BJ (cell line): ENCODE measurements at regions of chr16 and their contacts with region 1.

Region 1: DNA sequence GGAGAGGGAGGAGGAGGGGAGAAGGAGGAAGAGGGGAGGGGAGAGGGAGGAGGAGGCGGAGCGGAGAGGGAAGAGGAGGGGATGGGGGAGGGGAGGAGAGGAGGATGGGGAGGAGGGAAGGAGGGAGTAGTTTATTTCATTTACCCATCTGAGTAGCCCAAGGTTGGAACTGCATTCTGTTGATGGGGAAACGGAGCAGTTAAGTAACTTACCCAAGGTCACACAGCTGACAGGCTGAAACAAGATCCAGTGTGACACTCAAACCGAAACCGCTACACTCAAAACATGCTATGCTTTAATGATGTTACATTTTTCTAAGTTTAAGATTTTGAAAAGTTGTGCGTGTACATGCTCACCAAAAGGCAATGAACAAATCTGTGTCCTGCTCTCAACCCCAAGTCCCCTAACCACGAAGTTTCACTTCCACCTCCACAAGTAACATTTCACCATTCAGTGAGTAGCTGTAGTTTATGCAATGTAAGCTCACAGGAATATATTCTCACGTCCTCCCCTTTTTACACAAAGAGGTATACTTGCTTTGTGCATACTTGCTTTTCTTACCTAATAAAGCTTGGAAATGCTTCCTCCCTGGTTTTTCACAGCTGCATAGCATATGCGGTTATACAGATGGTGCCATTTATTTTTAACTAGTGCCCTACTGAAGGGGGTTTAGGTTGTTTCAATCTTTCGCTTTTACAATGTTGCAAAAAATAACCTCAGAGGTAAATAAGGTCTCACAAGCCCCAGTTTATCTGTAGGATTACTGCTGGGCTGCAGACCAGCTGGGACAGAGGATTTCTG is 275.3 kb downstream of the PARN start:
- DNase-seq: no peak
- H3K4me3 ChIP-seq: peak overlapping the region; percentile 23
- H3K27me3 ChIP-seq: no peaks in the 10 kb centered on the region; the same call in 1 of the 2 replicates
- CTCF ChIP-seq: no peak

Region 2: DNA sequence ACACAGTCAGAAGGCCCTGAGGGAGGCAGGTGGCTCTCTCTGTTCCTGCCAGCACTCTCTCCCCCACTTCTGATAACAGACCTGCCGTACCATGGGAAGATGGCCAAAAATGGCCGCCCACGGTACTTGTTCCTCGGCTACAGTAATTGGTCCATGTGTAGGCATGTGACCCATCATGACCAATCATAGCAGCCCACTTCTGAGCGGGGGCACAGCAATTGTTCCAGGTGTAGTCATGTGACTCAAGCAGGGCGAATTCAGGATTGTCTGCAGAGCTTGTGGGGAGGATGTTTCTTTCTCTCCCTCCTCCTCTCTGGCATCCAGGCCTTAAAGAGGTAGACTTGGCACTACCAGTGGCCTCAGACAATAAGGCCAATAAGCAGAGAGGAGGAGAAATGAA is 33.2 kb before region 1 on chr16:
- CTCF ChIA-PET with region 1: no interaction called
- POLR2A ChIA-PET with region 1: interaction called, 10 read pairs
- DNase-seq: no peak
- H3K4me3 ChIP-seq: no peak overlapping the region
- H3K27me3 ChIP-seq: no peaks in the 10 kb centered on the region
- CTCF ChIP-seq: no peak

Region 3: DNA sequence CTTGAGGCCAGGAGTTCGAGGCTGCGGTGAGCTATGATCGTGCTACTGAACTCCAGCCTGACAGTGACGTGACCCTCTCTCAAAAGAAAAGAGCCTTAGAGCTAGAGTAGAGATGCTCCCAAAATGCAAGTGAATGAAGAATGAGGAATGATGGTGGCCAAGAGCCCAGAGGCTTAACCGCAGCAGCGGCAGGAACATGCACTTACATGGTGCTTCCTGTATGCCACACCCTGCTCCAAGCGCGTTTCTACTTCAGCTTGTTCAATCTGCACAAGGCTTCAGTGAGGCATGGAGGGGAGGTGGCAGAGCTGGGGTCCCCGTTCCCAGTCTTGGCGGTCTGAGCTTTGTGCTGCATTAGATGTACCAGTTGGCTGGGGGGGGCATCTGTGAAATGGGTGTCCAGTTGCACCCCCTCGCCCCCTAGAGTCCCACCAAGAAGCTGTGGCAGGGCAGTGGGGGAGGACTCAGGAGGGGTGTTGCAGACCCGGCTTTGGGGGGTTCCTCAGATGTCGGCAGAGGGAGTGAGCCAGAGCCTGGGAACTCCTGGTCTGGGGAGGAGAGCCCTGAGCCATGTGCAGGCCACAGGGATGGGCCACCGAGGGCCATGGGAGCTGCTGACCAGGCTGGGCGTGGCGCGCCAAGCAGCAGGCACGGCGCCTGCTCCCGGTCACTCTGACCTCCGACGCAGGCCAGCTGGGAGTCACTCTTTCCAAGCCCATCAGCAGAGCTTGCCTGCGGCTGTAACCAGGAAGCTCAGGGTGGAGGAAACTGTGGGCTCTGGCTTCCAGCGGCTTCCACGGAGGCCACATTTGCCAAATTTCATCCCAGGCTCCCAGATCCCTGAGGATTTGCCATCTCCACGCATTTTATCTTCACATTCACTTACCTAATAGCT is 15.2 kb after region 1 on chr16:
- CTCF ChIA-PET with region 1: no interaction called
- POLR2A ChIA-PET with region 1: no interaction called
- DNase-seq: no peak
- H3K4me3 ChIP-seq: no peak overlapping the region
- H3K27me3 ChIP-seq: no peaks in the 10 kb centered on the region
- CTCF ChIP-seq: no peak